ENCODE measurements at regions of chr20 and their contacts with region 1.

Region 1: DNA sequence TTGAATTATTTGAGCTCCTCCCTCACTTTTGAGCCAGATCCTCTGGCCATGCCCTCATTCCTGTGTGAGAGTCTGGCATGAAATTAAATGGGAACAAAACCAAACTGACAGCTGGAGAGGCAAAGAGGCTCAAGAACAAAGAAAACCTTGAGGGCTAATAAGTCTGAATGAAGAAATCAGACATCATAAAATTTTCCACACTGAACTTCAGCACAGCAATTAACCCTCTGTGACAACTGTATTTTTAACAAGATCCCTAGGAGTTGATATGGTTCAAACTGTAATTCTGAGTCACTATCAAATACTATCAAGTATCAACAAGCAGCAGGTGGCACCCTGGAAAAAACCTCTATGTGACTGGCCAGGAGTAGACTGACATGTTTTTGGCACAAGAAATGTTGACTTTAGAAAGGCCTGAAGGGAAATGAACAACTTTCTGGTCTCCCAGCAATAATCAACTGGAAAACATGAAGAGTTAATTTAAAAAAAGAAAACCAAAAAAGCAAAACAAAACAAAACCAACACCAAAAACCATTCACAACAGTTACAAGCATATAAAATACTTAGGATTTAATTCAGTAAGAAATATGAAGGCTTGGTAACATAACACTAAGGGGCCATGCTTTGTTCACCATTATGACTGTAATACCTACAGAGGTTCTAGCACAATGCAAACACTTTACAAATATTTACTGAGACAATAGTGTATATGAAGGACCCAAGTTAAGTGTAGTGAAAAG is 109.6 kb upstream of the EMILIN3 start:
- DNase-seq: peak; percentile 70
- H3K4me3 ChIP-seq: no peak overlapping the region
- H3K27ac ChIP-seq: no peak overlapping the region
- H3K4me1 ChIP-seq: peaks cover 11% of the 10 kb centered on the region
- H3K27me3 ChIP-seq: no peaks in the 10 kb centered on the region
- CTCF ChIP-seq: no peak

Region 2: GRCh38 chr20:41487872-41488271 is 11.7 kb after region 1 on chr20:
- CTCF ChIA-PET with region 1: no interaction called
- dilution Hi-C with region 1: no loop called
- in situ Hi-C with region 1: no loop called
- intact Hi-C with region 1: loop called (anchors 1 kb)
- DNase-seq: no peak
- H3K4me3 ChIP-seq: no peak overlapping the region
- H3K27ac ChIP-seq: no peak overlapping the region
- H3K4me1 ChIP-seq: no peaks in the 10 kb centered on the region
- H3K27me3 ChIP-seq: no peaks in the 10 kb centered on the region
- CTCF ChIP-seq: no peak

Region 3: GRCh38 chr20:41501376-41501775 is 25.2 kb after region 1 on chr20:
- CTCF ChIA-PET with region 1: no interaction called
- dilution Hi-C with region 1: no loop called
- in situ Hi-C with region 1: no loop called
- intact Hi-C with region 1: loop called (anchors 1 kb)
- DNase-seq: no peak
- H3K4me3 ChIP-seq: no peak overlapping the region
- H3K27ac ChIP-seq: no peak overlapping the region
- H3K4me1 ChIP-seq: no peaks in the 10 kb centered on the region
- H3K27me3 ChIP-seq: no peaks in the 10 kb centered on the region
- CTCF ChIP-seq: no peak

Measured in mammary epithelial cell (primary cell).